IMR-90 (cell line): ENCODE measurements at regions of chr1 and their contacts with region 1.

Region 1: DNA sequence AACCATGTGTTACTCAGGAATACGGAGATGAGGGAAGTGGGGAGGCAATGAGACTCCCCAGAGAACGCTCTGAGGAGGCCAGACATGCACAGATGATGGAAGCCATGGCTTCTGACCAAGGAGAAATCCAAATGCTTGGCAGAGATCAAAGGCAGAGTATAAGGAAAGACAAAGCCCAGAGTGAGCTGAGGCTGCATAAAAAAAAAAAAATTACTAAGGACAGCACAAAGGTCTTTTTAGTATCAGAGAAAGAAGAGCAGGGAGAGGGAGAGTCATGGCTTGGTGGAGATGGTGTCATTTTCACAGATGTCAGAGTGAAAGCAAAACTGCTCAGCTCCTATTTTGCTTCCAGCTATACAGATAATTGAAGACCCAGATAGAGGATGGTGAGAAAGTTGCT is 8.1 kb upstream of the NCF2 start:
- DNase-seq: peak; percentile 30
- ATAC-seq: peak; percentile 22; the same call in 1 of the 2 replicates
- H3K4me3 ChIP-seq: no peak overlapping the region
- H3K27ac ChIP-seq: no peak overlapping the region
- H3K4me1 ChIP-seq: peaks cover 5% of the 10 kb centered on the region; the same call in 1 of the 2 replicates
- H3K27me3 ChIP-seq: no peaks in the 10 kb centered on the region
- CTCF ChIP-seq: no peak
- POLR2A ChIP-seq: no peak
- RAD21 ChIP-seq: no peak

Region 2: DNA sequence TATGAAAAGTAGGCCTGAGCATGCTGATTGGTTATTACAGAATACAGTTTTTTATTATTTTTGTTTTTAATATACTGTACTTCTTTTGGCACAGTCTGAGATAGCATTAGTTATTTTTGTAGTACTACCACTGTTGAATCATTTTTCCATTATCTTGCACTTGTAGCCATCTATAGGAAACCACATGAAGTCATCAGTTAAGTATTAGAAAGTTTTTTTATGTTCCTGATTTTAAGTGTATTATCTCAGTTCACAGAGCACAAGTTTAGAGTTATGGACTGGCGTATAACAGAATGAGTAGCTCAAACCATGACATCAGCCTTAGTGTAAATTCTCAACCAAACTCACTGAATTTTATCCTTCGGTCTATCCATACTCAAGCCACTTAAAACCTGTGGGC is 736.4 kb before region 1 on chr1:
- CTCF ChIA-PET with region 1: no interaction called
- POLR2A ChIA-PET with region 1: no interaction called
- dilution Hi-C with region 1: no loop called
- in situ Hi-C with region 1: no loop called
- intact Hi-C with region 1: no loop called
- DNase-seq: peak; percentile 88
- ATAC-seq: peak; percentile 60
- H3K4me3 ChIP-seq: no peak overlapping the region
- H3K27ac ChIP-seq: no peak overlapping the region
- H3K4me1 ChIP-seq: peaks cover 4% of the 10 kb centered on the region; the same call in 1 of the 2 replicates
- H3K27me3 ChIP-seq: no peaks in the 10 kb centered on the region
- CTCF ChIP-seq: no peak
- POLR2A ChIP-seq: no peak
- RAD21 ChIP-seq: no peak

Region 3: GRCh38 chr1:183480971-183481441 is 117.4 kb before region 1 on chr1:
- CTCF ChIA-PET with region 1: no interaction called
- POLR2A ChIA-PET with region 1: no interaction called
- dilution Hi-C with region 1: no loop called
- in situ Hi-C with region 1: no loop called
- intact Hi-C with region 1: no loop called
- DNase-seq: peak; percentile 19
- ATAC-seq: peak; percentile 49
- H3K4me3 ChIP-seq: no peak overlapping the region
- H3K27ac ChIP-seq: no peak overlapping the region
- H3K4me1 ChIP-seq: peaks cover 5% of the 10 kb centered on the region
- H3K27me3 ChIP-seq: no peaks in the 10 kb centered on the region
- CTCF ChIP-seq: no peak
- POLR2A ChIP-seq: no peak
- RAD21 ChIP-seq: no peak

Region 4: DNA sequence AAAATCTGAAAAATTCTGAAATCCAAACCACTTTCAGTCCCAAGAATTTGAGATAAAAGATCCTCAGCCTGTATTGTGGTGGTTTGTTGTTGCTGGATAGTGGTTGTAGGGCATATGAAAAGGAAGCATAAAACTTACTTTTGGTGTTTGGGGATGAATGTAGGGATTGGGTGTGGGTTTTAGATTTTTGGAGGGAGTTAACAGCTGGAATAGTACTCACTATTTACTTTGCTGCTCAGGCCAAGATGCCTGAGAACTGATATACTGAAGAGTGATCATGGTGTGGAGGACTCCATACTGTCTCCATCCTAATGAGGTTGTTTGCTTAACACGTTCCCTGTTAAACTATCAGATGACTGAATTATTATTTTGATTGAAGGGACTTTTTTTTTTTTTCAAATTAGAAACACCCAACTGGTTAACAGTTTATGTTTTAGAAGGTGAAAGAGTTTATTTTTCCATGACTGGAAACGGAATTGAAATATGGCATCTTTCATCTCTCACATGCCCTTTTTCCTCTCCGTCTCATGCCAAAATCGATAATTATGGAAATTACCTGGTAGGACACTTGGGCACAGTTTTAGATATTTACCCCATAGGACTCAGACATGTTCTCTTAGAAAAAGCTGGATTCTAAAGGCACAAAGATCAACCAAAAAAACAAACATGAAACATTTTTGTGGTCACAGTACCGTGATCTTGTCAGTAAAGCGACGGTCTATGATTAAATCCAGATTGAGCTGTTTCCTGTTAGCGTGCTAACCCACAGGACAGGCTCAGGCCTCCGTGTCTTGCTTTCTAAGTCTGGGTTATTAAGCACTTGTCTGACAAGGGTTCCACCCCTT is 243.8 kb after region 1 on chr1:
- CTCF ChIA-PET with region 1: no interaction called
- POLR2A ChIA-PET with region 1: interaction called, 12 read pairs
- dilution Hi-C with region 1: no loop called
- in situ Hi-C with region 1: no loop called
- intact Hi-C with region 1: no loop called
- DNase-seq: peak; percentile 97
- ATAC-seq: peak; percentile 91
- H3K4me3 ChIP-seq: no peak overlapping the region
- H3K27ac ChIP-seq: peak overlapping the region; percentile 52; the same call in 1 of the 2 replicates
- H3K4me1 ChIP-seq: peaks cover 13% of the 10 kb centered on the region
- H3K27me3 ChIP-seq: no peaks in the 10 kb centered on the region
- CTCF ChIP-seq: no peak
- POLR2A ChIP-seq: no peak
- RAD21 ChIP-seq: no peak

Region 5: GRCh38 chr1:184310157-184310806 is 711.9 kb after region 1 on chr1:
- CTCF ChIA-PET with region 1: no interaction called
- POLR2A ChIA-PET with region 1: no interaction called
- dilution Hi-C with region 1: no loop called
- in situ Hi-C with region 1: no loop called
- intact Hi-C with region 1: no loop called
- DNase-seq: no peak
- ATAC-seq: no peak
- H3K4me3 ChIP-seq: no peak overlapping the region
- H3K27ac ChIP-seq: no peak overlapping the region
- H3K4me1 ChIP-seq: no peaks in the 10 kb centered on the region; the same call in 1 of the 2 replicates
- H3K27me3 ChIP-seq: no peaks in the 10 kb centered on the region
- CTCF ChIP-seq: no peak
- POLR2A ChIP-seq: no peak
- RAD21 ChIP-seq: no peak